Posterior cingulate gyrus (tissue), 11 donors: ENCODE measurements at regions of chrX and their contacts with region 1.

Region 1: DNA sequence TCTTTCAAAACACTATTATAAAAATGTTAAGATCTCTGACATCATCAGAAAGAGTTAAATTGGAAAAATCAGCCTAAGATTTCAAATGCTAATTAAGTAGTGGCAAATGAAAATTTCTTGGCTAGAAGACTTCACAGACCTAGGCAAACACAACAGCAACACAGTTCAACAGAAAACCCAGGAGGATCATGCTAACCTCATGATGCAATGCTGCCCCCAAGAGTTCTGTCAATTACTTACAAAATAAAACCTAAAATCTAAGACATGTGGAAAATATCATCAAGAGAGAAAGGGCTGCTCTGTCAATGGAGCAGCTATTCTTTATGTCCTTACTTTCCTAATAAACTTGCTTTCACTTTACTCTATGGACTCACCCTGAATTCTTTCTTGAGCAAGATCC is 21.0 kb downstream of the S100G start:
- DNase-seq: peak in 2 of 10 donors; percentile 2 to 20

Region 2: DNA sequence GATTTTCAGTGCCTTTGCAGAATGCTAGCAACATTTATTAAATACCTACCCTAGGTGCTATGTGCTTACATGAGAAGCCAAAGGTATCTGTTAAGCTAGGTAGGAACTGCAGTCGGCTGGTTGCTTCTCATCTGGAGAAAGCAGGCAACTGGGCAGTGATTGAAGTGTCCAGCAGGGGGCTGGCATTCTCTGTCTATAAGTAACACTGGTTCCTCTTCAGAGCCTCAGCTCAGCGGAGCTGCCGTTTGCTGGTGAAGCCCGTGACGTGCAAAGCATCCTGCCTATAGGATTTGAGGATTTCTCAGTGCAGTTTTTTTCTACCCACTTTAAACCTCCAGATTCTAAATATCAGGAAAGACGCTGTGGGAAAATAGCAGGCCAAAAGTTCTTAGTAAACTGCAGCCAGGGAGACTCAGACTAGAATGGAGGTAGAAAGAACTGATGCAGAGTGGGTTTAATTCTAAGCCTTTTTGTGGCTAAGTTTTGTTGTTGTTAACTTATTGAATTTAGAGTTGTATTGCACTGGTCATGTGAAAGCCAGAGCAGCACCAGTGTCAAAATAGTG is 547.7 kb before region 1 on chrX and contains the start of gene GRPR:
- intact Hi-C with region 1: loop called (anchors 10 kb)
- DNase-seq: peak; percentile 55 to 96 (median 72)

Region 3: DNA sequence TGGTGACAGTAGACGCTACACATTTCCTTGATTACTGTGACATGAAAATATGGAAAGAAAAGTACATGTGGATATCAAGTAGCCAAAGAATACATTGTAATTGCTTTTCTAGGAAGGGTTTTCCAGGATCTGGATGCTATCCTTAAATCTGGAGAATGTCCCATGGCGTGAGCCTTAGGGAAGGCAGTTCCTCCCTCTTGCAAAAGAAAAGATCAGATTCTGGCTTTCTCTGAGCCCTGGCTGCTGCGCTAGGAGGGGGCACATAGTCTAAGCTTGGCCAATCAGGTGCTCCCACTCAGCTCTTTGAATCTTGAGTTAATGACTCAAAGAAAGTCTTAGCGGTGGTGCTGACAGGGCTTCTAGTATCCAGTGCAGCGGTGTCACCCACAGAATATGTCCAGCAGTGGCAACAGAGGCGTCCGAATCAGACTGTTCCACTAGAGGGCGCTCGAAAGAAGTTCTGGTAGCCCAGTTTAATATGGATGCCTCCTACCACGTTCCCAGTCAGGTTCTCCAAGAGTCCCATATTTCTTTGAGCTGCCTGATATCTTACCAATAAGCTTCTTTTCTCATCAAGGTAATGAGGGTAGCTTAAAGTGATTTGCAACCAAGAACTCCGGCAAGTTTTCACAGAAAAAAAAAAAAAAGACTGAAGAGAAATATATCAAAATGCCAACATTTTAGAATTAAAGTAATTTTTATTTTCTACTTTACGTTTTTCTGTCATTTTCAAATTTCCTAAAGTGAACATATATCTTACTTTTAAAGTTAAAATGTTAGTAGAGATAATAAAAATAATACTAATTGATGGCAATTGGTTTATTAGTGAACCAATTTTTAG is 234.4 kb before region 1 on chrX:
- intact Hi-C with region 1: loop called (anchors 5 kb)
- DNase-seq: peak in 8 of 10 donors; percentile 30 to 92 (median 64)

Region 4: DNA sequence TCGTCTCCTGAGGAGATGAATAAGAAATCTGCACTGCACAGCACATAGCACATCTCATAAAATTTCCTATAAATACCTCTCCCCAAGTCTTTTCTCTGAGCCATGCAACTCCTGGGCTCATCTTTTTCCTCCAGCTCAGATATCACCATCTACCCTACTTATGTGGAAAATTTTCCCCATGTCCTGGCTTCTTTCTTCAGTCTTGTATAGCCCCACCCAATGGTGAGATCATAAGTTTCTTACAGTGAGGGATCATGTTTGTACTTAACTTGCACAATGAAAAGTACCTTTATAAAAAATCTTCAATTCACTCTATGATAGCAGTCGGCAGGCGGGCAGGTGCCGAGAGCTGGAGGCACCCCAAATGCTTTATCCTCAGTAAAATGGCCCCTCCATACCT is 219.7 kb before region 1 on chrX:
- intact Hi-C with region 1: no loop called
- DNase-seq: no peak